ENCODE measurements at regions of chr10 and their contacts with region 1.

Region 1: DNA sequence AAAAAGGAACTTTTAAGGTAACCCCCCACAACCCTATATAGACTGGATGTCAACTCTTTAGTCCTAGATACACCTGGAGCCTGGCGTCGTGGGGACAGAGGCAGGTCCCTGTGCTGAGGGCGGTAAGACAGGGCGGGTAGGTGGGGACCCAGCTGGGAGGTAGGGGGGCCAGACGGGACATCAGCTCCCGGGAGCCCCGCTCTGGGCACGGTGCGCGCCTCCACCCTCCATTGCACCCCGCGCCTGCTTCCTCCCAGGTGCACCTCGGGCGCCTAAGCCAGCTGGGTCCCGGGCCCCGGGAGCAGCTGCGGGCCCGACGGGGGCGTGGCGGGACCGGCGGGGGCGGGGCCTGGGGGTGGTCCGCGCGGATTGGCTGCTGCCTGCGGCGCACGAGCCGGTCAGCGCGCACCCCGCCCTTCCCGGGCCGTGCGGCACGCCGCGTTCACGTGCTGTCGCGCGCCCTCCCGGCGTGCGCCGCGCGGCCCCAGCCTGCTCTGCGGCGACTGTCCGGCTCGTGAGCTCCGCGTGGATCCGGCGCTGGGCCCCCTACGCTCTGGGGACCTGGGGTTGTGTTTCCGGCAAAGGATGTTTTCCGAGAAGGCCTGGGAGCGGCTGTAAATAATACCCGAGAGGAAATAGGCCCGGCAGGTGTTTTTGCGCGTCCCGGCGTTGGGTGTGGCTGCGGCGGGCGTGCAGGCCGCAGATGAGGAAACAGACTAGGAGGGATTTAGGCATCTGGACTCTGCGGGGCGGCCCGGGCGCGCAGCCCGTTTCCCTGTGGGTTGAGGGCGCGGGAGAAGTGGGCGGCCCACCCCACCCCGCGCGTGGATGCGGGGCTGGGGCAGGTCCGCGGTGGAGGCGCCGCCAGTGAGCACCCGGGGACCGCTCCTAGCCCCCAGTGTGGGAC is 39.1 kb upstream of the PFKFB3 start:
- DNase-seq: peak; percentile 96

Region 2: DNA sequence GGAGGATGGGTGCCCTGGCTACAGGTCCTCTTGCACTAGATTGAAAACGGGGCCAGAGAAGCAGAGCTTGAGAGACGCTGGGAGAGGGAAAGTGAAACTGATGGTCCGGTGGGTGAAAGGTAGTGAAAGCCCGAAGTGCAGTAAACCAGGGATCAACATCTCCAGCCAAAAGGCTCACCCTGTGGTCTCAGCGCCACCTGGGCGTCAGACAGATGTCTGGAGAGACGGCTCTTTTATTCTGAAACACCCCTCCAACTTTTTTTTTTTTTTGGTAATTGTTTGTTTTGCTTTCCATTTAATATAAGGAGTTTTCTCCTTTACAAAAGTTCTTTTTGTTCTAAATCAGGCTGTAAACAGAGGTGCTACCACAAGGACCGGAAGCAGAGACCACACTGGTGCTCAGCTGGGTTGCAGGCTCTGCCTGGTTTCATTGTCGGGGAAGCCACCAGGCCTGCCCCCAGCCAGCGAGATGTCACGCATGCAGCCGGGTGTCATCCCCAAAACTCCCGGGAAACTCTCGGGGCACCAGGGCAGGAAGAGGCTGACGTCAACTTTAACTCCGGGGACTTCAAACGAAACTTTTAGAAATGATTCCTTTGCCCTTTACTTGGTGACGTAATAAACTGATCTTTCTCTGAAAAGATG is 112.7 kb before region 1 on chr10:
- CTCF ChIA-PET with region 1: no interaction called
- POLR2A ChIA-PET with region 1: no interaction called
- DNase-seq: no peak

Region 3: GRCh38 chr10:6144406-6145165 is 19.0 kb before region 1 on chr10:
- CTCF ChIA-PET with region 1: interaction called, 6 read pairs
- POLR2A ChIA-PET with region 1: interaction called, 12 read pairs
- DNase-seq: peak; percentile 79

Region 4: GRCh38 chr10:6364893-6365292 is 201.3 kb after region 1 on chr10:
- CTCF ChIA-PET with region 1: no interaction called
- POLR2A ChIA-PET with region 1: no interaction called
- DNase-seq: no peak